Ascending aorta (tissue), 2 donors: ENCODE measurements at regions of chr11 and their contacts with region 1.

Region 1: GRCh38 chr11:16973338-16973964 is 40.8 kb downstream of the PLEKHA7 start:
- DNase-seq: no peak
- H3K4me3 ChIP-seq: no peak overlapping the region
- H3K27ac ChIP-seq: no peak overlapping the region
- H3K4me1 ChIP-seq: no peaks in the 10 kb centered on the region
- H3K27me3 ChIP-seq: no peaks in the 10 kb centered on the region
- CTCF ChIP-seq: no peak

Region 2: DNA sequence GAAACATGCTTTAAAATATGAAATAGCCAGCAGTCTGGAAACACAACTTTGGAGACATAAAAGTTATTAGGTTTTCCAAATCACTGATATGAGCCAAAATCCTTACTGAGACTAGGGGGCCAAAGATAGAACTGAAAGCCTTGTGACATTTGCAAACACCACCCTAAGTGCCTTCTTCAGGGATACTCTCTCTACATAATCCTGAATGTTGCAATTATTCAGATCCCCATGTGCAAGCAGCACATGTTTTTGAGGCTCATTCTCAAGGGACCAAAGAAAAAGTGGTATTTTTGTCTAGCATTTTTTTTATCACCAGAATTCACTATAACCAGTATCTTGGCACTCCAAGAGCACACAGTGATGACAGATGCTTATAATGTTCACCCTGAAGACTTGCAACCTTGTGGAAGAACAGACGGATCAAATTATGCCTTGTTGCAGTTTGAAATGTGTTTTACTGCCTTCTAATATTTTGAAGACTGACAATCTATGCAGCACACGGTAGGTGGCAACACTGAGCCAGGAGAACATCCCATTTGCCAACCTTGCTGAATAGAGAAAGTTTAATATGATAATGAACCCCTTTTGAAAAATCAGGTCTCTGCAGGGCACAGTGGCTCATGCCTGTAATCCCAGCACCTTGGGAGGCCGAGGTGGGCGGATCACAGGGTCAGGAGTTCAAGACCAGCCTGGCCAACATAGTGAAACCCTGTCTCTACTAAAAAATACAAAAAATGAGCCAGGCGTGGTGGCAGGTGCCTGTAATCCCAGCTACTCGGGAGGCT is 37.7 kb before region 1 on chr11:
- intact Hi-C with region 1: loop called (anchors 1 kb)
- DNase-seq: no peak
- H3K4me3 ChIP-seq: no peak overlapping the region
- H3K27ac ChIP-seq: no peak overlapping the region
- H3K4me1 ChIP-seq: peaks cover 0 to 4% of the 10 kb centered on the region in 2 donors
- H3K27me3 ChIP-seq: no peaks in the 10 kb centered on the region
- CTCF ChIP-seq: peak in 2 of 3 experiments; percentile 46 to 72